Activated T-helper 1 cell treated with anti-CD3 and anti-CD28 coated beads, Interleukin-12 subunit alpha, Interleukin-12 subunit beta, Interleukin-2, Interleukin-4 antibody, amounts not matched to agents 30 ng/mL and 10 ng/mL and 1 ng/mL, durations not matched to agents 14 hours and 24 hours and 36 hours (primary cell): ENCODE measurements at regions of chr19 and their contacts with region 1.

Region 1: DNA sequence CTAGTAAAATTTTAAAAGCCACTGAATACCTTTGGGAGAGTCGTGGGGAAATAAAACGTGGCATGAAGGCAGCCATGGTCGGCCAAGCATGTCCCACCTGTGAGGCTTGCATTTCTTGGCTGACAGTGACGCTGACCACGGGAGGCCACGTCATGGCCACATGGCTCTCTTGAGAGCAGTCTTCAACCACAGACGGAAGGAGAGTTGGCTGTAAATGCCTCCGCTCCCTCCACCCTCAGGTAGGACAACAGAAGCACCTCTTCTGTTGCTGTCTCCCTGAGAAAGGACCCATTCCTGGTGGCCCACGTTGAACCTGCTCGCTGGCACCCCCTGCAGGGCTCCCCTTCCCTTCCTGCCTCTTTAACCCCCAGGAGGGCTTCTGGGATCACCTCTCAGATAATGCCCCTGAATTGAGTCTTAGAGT is 10.6 kb upstream of the LRRC25 start:
- DNase-seq: no peak
- H3K4me3 Mint-ChIP-seq: no peak overlapping the region
- H3K27ac Mint-ChIP-seq: no peak overlapping the region
- H3K4me1 Mint-ChIP-seq: peaks cover 4% of the 10 kb centered on the region
- H3K27me3 Mint-ChIP-seq: peaks cover 10% of the 10 kb centered on the region

Region 2: DNA sequence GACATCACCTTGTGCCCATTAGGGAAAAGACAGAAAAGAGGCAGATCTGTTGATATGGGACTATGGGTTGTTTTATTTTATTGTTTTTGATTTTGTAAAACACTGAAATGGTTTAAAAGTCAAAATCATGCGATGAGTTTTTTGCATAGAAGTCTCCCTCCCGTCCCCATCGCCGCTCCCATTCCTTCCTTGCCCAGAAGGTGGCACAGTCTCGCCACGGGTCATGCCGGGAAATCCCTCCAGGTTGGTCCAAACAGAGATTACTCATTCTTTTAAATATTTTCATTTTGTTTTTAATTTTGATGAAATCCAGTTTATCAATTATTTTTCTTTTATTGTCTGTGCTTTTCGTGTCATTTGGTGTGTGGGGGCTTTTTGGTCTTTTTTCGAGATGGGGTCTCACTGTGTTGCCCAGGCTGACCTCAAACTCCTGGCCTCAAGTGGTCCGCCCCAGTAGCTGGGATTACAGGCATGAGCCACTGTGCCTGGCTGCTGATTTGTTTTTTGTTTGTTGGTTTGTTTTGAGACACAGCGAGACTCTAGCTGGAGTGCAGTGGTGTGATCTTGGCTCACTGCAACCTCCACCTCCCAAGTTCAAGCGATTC is 58.4 kb before region 1 on chr19:
- intact Hi-C with region 1: loop called (anchors 1 kb)
- DNase-seq: no peak
- H3K4me3 Mint-ChIP-seq: no peak overlapping the region
- H3K27ac Mint-ChIP-seq: no peak overlapping the region
- H3K4me1 Mint-ChIP-seq: no peaks in the 10 kb centered on the region
- H3K27me3 Mint-ChIP-seq: no peaks in the 10 kb centered on the region

Region 3: DNA sequence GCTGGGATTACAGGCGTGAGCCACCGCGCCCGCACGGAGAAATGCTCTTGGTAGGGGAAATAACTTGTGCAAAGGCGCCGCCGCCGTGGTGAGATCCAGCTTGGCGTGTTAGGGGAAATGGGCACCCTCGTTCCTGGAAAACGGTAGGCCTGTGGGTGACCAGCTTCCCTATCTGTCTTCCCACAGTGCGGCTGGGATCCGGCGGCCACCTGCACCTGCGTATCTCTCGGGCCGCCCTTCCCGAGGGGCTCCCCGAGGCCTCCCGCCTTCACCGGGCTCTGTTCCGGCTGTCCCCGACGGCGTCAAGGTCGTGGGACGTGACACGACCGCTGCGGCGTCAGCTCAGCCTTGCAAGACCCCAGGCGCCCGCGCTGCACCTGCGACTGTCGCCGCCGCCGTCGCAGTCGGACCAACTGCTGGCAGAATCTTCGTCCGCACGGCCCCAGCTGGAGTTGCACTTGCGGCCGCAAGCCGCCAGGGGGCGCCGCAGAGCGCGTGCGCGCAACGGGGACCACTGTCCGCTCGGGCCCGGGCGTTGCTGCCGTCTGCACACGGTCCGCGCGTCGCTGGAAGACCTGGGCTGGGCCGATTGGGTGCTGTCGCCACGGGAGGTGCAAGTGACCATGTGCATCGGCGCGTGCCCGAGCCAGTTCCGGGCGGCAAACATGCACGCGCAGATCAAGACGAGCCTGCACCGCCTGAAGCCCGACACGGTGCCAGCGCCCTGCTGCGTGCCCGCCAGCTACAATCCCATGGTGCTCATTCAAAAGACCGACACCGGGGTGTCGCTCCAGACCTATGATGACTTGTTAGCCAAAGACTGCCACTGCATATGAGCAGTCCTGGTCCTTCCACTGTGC is 19.7 kb before region 1 on chr19:
- intact Hi-C with region 1: loop called (anchors 1 kb)
- DNase-seq: peak; percentile 77
- H3K4me3 Mint-ChIP-seq: peak overlapping the region; percentile 61
- H3K27ac Mint-ChIP-seq: no peak overlapping the region
- H3K4me1 Mint-ChIP-seq: peaks cover 5% of the 10 kb centered on the region
- H3K27me3 Mint-ChIP-seq: peaks cover 57% of the 10 kb centered on the region